PC-3 (cell line): ENCODE measurements at regions of chr1 and their contacts with region 1.

Region 1: GRCh38 chr1:11907275-11908094 is 18.7 kb downstream of the KIAA2013 start:
- DNase-seq: peak; percentile 95
- ATAC-seq: peak; percentile 53
- H3K4me3 ChIP-seq: peak overlapping the region; percentile 47; the same call in 1 of the 2 replicates
- H3K27ac ChIP-seq: peak overlapping the region; percentile 95
- H3K4me1 ChIP-seq: peaks cover 3% of the 10 kb centered on the region; the same call in 1 of the 2 replicates
- H3K27me3 ChIP-seq: no peaks in the 10 kb centered on the region
- CTCF ChIP-seq: peak; percentile 70

Region 2: GRCh38 chr1:11147197-11147770 is 760.2 kb before region 1 on chr1:
- CTCF ChIA-PET with region 1: no interaction called
- POLR2A ChIA-PET with region 1: interaction called, 26 read pairs
- intact Hi-C with region 1: no loop called
- DNase-seq: peak; percentile 93
- ATAC-seq: peak; percentile 92
- H3K4me3 ChIP-seq: no peak overlapping the region
- H3K27ac ChIP-seq: peak overlapping the region; percentile 84
- H3K4me1 ChIP-seq: peaks cover 41% of the 10 kb centered on the region
- H3K27me3 ChIP-seq: no peaks in the 10 kb centered on the region
- CTCF ChIP-seq: no peak

Region 3: DNA sequence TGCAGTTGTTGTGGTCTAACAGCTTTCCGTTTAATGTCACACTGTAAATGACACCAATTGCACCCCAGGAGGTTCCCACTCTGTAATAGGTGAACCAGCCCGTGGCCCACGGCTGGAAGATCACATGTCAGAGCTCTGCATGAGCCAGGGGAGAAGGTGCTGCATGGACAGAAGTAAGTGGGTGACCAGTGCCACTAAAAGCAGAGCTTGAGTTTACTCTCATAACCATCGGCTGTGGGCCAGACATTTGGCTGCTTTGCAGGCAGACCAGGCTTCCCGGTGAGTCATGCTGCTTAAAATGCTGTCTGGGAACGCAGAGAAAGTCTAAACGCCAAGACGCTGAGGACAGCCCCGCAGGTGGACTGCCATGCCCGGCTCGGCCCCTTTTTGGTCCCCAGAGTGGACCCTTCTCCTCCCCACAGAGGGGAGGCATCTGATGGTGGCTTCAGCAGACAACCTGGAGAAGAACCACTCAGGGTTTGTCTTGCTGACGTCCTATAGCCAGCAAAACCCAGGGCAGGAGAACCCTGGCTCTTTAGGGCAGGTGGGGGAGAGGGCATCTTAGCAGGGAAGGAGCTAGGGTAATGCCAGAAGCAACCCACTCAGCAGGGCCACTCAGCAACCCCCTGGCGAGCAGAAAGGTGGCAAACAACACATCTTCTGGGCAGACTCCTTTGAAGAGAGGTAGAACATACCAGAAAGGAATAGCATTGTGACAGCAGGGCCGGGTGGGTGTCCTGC is 11.5 kb after region 1 on chr1:
- CTCF ChIA-PET with region 1: no interaction called
- POLR2A ChIA-PET with region 1: interaction called, 28 read pairs
- intact Hi-C with region 1: no loop called
- DNase-seq: peak; percentile 86
- ATAC-seq: peak; percentile 97
- H3K4me3 ChIP-seq: no peak overlapping the region
- H3K27ac ChIP-seq: peak overlapping the region; percentile 43; the same call in 1 of the 2 replicates
- H3K4me1 ChIP-seq: peaks cover 21% of the 10 kb centered on the region
- H3K27me3 ChIP-seq: no peaks in the 10 kb centered on the region
- CTCF ChIP-seq: no peak

Region 4: GRCh38 chr1:11934302-11935056 is 27.0 kb after region 1 on chr1 and contains the start of gene PLOD1:
- CTCF ChIA-PET with region 1: no interaction called
- POLR2A ChIA-PET with region 1: interaction called, 3 read pairs
- intact Hi-C with region 1: loop called (anchors 2 kb)
- DNase-seq: peak; percentile 86
- ATAC-seq: peak; percentile 88
- H3K4me3 ChIP-seq: peak within 1 kb of the TSS; percentile 79
- H3K27ac ChIP-seq: peak within 1 kb of the TSS; percentile 10
- H3K4me1 ChIP-seq: peaks cover 30% of the 10 kb centered on the region
- H3K27me3 ChIP-seq: no peaks in the 10 kb centered on the region
- CTCF ChIP-seq: no peak
- total RNA-seq, gene PLOD1: 179 and 216 TPM in 2 replicates

Region 5: DNA sequence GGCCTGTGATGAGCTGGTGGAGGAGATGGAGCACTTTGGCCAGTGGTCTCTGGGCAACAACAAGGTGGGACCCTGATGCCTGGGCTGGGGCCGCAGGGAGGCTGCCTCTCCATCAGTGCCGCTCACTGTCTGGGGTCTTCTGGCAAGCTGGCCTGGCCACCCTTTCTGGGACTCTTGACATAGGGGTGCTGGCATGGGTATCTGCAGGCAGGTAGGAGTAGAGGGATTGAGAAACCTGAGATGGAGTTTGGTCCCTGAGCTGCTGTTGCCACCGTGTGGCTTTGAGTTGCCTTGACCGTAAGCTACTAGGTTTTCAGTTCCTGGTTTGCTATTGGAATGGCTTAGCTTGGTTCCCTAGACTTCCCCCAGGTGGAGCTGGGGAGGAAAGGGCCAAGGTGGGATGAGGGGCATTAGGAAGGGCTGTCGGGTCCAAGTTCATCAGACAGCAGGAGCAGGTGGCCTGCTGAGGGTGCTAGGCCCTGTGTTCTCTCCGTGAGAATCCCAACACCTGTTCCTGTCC is 59.6 kb after region 1 on chr1:
- CTCF ChIA-PET with region 1: interaction called, 4 read pairs
- POLR2A ChIA-PET with region 1: interaction called, 4 read pairs
- intact Hi-C with region 1: loop called (anchors 2 kb)
- DNase-seq: peak; percentile 60
- ATAC-seq: peak; percentile 82
- H3K4me3 ChIP-seq: no peak overlapping the region
- H3K27ac ChIP-seq: no peak overlapping the region
- H3K4me1 ChIP-seq: no peaks in the 10 kb centered on the region
- H3K27me3 ChIP-seq: no peaks in the 10 kb centered on the region
- CTCF ChIP-seq: peak; percentile 68

Region 6: GRCh38 chr1:11979851-11980675 is 72.6 kb after region 1 on chr1 and contains the start of gene MFN2:
- CTCF ChIA-PET with region 1: interaction called, 7 read pairs
- POLR2A ChIA-PET with region 1: interaction called, 34 read pairs
- intact Hi-C with region 1: loop called (anchors 5 kb)
- DNase-seq: peak; percentile 96
- ATAC-seq: peak; percentile 89
- H3K4me3 ChIP-seq: peak within 1 kb of the TSS; percentile 81
- H3K27ac ChIP-seq: peak within 1 kb of the TSS; percentile 81
- H3K4me1 ChIP-seq: peaks cover 28% of the 10 kb centered on the region
- H3K27me3 ChIP-seq: no peaks in the 10 kb centered on the region
- CTCF ChIP-seq: no peak
- total RNA-seq, gene MFN2: 97.8 and 101 TPM in 2 replicates

Region 7: GRCh38 chr1:12019858-12020509 is 112.5 kb after region 1 on chr1:
- CTCF ChIA-PET with region 1: no interaction called
- POLR2A ChIA-PET with region 1: interaction called, 20 read pairs
- intact Hi-C with region 1: no loop called
- DNase-seq: no peak
- ATAC-seq: peak; percentile 3; the same call in 1 of the 2 replicates
- H3K4me3 ChIP-seq: peak overlapping the region; percentile 85
- H3K27ac ChIP-seq: no peak overlapping the region
- H3K4me1 ChIP-seq: no peaks in the 10 kb centered on the region
- H3K27me3 ChIP-seq: no peaks in the 10 kb centered on the region
- CTCF ChIP-seq: no peak

Region 8: GRCh38 chr1:12095452-12096263 is 188.2 kb after region 1 on chr1:
- CTCF ChIA-PET with region 1: no interaction called
- POLR2A ChIA-PET with region 1: no interaction called
- intact Hi-C with region 1: no loop called
- DNase-seq: peak; percentile 3
- ATAC-seq: no peak
- H3K4me3 ChIP-seq: no peak overlapping the region
- H3K27ac ChIP-seq: no peak overlapping the region
- H3K4me1 ChIP-seq: peaks cover 12% of the 10 kb centered on the region; the same call in 1 of the 2 replicates
- H3K27me3 ChIP-seq: no peaks in the 10 kb centered on the region
- CTCF ChIP-seq: no peak